HepG2 (cell line): ENCODE measurements at regions of chr9 and their contacts with region 1.

Region 1: GRCh38 chr9:72280913-72281500 is 84.0 kb downstream of the ZFAND5 start:
- DNase-seq: peak; percentile 38
- ATAC-seq: peak; percentile 95
- H3K4me3 ChIP-seq: no peak overlapping the region
- H3K27ac ChIP-seq: no peak overlapping the region
- H3K4me1 ChIP-seq: no peaks in the 10 kb centered on the region
- H3K27me3 ChIP-seq: no peaks in the 10 kb centered on the region
- CTCF ChIP-seq: peak; percentile 91
- EP300 ChIP-seq: no peak
- POLR2A ChIP-seq: no peak
- RAD21 ChIP-seq: peak; percentile 86

Region 2: GRCh38 chr9:72315510-72316311 is 34.7 kb after region 1 on chr9:
- CTCF ChIA-PET with region 1: no interaction called
- POLR2A ChIA-PET with region 1: no interaction called
- in situ Hi-C with region 1: no loop called
- intact Hi-C with region 1: no loop called
- DNase-seq: no peak
- ATAC-seq: peak; percentile 23; the same call in 1 of the 3 replicates
- H3K4me3 ChIP-seq: no peak overlapping the region
- H3K27ac ChIP-seq: no peak overlapping the region
- H3K4me1 ChIP-seq: peaks cover 13% of the 10 kb centered on the region; the same call in 1 of the 2 replicates
- H3K27me3 ChIP-seq: no peaks in the 10 kb centered on the region; a peak in 1 of 5 replicates
- CTCF ChIP-seq: no peak
- EP300 ChIP-seq: no peak
- POLR2A ChIP-seq: no peak
- RAD21 ChIP-seq: no peak

Region 3: GRCh38 chr9:72592502-72593403 is 311.7 kb after region 1 on chr9:
- CTCF ChIA-PET with region 1: interaction called, 34 read pairs
- POLR2A ChIA-PET with region 1: no interaction called
- in situ Hi-C with region 1: loop called (anchors 5 kb)
- intact Hi-C with region 1: loop called (anchors 1 kb)
- DNase-seq: peak; percentile 30
- ATAC-seq: peak; percentile 89
- H3K4me3 ChIP-seq: no peak overlapping the region
- H3K27ac ChIP-seq: no peak overlapping the region
- H3K4me1 ChIP-seq: no peaks in the 10 kb centered on the region
- H3K27me3 ChIP-seq: no peaks in the 10 kb centered on the region; a peak in 1 of 5 replicates
- CTCF ChIP-seq: peak; percentile 78
- EP300 ChIP-seq: no peak
- POLR2A ChIP-seq: no peak
- RAD21 ChIP-seq: peak; percentile 66